PC-3 (cell line): ENCODE measurements at regions of chr20 and their contacts with region 1.

Region 1: DNA sequence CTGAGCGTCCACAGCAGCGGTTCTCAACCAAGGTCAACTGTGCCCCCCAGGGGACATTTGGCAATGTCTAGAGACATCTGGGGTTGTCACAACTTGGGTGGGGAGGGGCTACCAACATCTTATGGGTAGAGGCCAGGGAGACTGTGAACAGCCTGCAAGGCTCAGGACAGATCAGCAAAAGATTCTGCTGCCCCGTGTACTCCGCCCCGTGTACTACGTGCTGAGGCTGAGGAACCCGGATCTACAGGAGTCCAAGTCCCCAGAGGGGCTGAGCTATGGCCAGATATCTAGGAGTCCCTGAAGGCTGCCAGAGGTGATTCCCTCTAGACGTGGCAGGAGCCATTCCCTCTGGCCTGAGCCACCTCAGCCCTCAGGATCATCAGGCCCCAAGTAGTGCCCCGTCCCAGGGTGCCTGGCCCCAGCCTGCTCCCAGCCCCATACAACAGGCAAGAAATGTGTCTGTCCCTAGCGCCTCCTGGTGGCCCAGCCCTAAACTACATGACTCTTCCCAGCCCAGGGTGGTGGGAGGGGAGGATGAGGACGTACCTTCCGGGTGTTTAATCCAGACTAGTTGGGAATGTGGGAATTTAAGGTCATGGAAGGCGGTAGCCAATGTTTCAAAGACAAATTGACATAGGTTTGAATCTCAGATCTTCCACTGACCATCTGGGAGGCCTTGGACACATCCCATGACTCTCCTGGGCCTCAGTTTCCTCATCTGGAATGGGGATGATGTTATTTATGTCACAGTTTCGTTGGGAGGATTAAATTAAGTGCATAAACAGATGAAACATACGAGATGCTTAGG is 49.5 kb upstream of the PTPN1 start:
- DNase-seq: peak; percentile 97
- ATAC-seq: peak; percentile 91
- H3K4me3 ChIP-seq: no peak overlapping the region
- H3K27ac ChIP-seq: no peak overlapping the region
- H3K4me1 ChIP-seq: peaks cover 7% of the 10 kb centered on the region; the same call in 1 of the 2 replicates
- H3K27me3 ChIP-seq: no peaks in the 10 kb centered on the region
- CTCF ChIP-seq: peak; percentile 98

Region 2: DNA sequence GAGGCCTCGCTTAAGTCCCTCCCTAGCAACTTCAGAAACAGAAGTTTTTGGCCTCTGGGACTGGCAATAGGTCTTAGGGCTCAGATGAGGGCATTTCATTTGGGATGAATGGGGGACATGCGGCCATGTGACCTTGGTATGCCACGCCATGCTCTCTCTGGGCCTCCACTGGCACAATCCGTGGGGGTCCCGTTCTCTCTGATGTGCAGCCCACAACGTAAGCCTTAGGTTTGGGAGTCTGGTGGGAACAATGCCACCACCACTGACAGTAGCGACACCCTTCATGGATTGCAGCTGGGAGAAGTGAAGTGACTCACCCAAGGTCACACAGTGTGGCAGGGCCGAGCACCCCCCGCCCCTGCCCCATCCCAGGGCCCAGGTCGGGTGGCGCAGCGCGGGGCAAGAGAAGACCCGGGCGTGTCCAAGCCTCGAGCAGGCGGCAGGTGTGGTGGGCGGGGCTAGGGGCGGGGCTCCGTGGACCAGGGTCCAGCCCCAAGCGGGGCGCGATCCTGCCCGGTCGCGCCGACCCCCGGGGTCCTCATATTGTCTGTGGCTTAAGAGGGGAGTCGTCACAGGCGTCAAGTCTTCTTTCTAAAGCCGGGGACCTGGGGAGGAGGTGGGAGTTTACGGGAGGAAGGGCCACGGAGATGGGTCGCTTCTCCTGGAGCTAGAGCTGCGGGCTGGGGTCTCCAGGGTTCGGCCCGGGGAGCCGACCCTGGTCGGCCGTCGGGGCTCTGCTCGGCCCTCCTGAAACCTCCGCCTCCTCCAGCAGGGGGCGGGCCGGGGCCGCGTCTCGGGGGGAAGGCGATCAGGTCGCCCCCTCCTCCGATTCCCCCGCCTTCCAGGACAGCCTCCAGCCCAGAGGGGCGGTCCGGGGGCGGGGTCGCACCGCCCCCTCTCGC is 270.7 kb before region 1 on chr20:
- CTCF ChIA-PET with region 1: interaction called, 4 read pairs
- POLR2A ChIA-PET with region 1: no interaction called
- intact Hi-C with region 1: loop called (anchors 1 kb)
- DNase-seq: peak; percentile 92
- ATAC-seq: peak; percentile 39
- H3K4me3 ChIP-seq: peak overlapping the region; percentile 96
- H3K27ac ChIP-seq: peak overlapping the region; percentile 75; the same call in 1 of the 2 replicates
- H3K4me1 ChIP-seq: peaks cover 28% of the 10 kb centered on the region
- H3K27me3 ChIP-seq: no peaks in the 10 kb centered on the region
- CTCF ChIP-seq: peak; percentile 72

Region 3: GRCh38 chr20:50308513-50309279 is 152.0 kb before region 1 on chr20:
- CTCF ChIA-PET with region 1: no interaction called
- POLR2A ChIA-PET with region 1: no interaction called
- intact Hi-C with region 1: loop called (anchors 5 kb)
- DNase-seq: peak; percentile 96
- ATAC-seq: peak; percentile 69
- H3K4me3 ChIP-seq: peak overlapping the region; percentile 29
- H3K27ac ChIP-seq: peak overlapping the region; percentile 89
- H3K4me1 ChIP-seq: peaks cover 57% of the 10 kb centered on the region
- H3K27me3 ChIP-seq: no peaks in the 10 kb centered on the region
- CTCF ChIP-seq: no peak; the same call in 1 of the 2 replicates

Region 4: DNA sequence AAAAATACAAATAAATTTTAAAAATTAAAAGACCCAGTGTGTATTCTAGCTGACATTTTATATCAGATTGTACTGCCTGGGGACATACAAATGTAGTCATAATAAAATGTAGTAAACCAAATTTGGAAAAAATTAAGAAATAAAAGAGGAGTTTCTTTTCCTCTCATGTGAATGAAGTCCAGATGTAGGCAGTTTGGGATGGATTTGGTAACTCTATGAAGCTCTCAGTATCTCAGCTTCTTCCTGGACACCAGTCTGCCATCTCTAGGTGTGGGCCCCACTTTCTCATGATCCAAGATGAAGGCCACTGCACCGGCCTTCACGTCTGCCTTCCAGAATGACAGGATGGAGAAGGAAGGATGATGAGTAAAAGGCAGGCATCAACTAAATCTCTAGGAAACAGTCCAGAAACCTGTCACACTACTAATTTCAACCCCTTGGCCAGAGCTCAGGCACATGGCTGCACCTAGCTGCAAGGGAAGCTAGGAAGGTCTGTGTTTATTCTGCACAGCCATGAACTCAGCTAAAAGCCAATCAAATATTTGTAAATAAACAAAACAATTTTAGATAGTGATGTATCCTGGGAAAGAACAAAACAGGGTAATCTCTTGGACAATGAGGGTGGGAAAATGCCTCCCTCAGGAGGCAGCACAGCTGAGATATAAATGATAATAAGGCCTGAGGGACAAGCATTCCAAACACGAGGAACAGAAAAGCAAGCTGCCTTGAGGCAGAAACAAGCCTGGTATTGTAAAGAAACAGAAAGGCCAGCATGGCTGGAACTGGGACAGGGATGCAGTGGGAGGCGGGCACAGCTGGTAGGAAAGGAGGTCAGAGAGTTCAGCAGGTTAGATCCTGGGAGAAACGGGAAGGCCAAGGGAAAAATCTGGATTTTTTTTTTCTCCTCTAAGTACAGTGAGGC is 39.0 kb before region 1 on chr20:
- CTCF ChIA-PET with region 1: no interaction called
- POLR2A ChIA-PET with region 1: no interaction called
- intact Hi-C with region 1: loop called (anchors 5 kb)
- DNase-seq: no peak
- ATAC-seq: no peak
- H3K4me3 ChIP-seq: no peak overlapping the region
- H3K27ac ChIP-seq: peak overlapping the region; percentile 96
- H3K4me1 ChIP-seq: peaks cover 34% of the 10 kb centered on the region
- H3K27me3 ChIP-seq: no peaks in the 10 kb centered on the region
- CTCF ChIP-seq: no peak